CD4-positive, alpha-beta memory T cell (primary cell): ENCODE measurements at regions of chr19 and their contacts with region 1.

Region 1: DNA sequence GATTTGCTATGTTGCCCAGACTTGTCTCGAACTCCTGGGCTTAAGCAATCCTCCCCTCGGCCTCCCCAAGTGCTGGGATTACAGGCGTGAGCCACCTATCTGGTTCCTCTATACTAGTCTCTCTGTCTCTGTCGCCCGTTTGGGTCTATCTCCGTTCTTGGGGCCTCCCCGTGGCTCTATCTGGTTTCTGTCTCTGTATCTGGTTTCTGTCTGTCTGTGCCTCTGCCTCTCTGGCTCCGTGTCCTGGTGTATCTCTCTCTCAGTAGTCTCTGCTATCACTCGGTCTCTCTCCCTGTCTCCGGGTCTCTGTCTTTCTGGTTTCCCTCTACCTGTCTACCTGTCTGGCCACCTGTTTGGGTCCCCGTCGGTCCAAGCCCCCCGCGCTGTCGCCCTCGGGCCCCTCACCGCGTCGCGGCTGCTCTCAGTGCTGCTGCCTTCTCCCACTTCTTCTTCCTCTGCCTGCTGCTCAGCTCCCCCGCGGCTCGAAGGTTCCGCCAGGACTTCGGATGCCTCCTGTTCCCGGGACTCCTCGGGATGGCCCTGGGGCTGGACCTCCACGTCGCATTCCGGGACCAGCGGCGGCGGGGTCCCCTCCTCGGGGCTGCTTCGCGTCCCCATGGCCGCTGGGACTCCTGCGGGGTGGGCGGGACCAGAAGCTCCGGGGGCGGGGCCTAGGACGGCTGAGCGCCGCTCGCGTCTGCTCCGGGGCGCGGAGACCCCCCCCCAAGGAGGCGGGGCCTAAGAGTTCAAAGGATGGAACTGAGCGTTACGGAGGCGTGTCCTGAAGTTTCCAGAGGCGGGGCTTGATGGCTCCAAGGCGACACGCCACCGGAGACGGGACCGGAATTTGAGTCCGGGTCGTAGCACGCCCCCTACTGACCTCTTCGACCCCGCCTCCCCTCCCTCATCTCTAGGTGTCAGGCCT is 783 bp downstream of the PHLDB3 start:
- DNase-seq: peak; percentile 96 to 99 (median 97)
- H3K4me3 ChIP-seq: peak overlapping the region; percentile 73 to 74
- H3K4me3 Mint-ChIP-seq: peak overlapping the region; percentile 91 to 98 (median 94)
- H3K27ac ChIP-seq: peak overlapping the region; percentile 89
- H3K27ac Mint-ChIP-seq: peak overlapping the region; percentile 95 to 100 (median 98)
- H3K4me1 ChIP-seq: peaks cover 22% of the 10 kb centered on the region
- H3K4me1 Mint-ChIP-seq: peaks cover 16 to 51% (median 34%) of the 10 kb centered on the region in 4 donors
- H3K27me3 ChIP-seq: no peaks in the 10 kb centered on the region
- H3K27me3 Mint-ChIP-seq: no peaks in the 10 kb centered on the region

Region 2: GRCh38 chr19:43457809-43458208 is 46.0 kb before region 1 on chr19:
- CTCF ChIA-PET with region 1: interaction called, 19 read pairs
- POLR2A ChIA-PET with region 1: interaction called, 107 read pairs
- intact Hi-C with region 1: loop called (anchors 1 kb)
- DNase-seq: no peak
- H3K4me3 ChIP-seq: no peak overlapping the region
- H3K4me3 Mint-ChIP-seq: no peak overlapping the region
- H3K27ac ChIP-seq: no peak overlapping the region
- H3K27ac Mint-ChIP-seq: no peak overlapping the region
- H3K4me1 ChIP-seq: peaks cover 8% of the 10 kb centered on the region
- H3K4me1 Mint-ChIP-seq: peaks cover 4 to 23% (median 13%) of the 10 kb centered on the region in 4 donors
- H3K27me3 ChIP-seq: no peaks in the 10 kb centered on the region
- H3K27me3 Mint-ChIP-seq: no peaks in the 10 kb centered on the region

Region 3: GRCh38 chr19:43463381-43464136 is 40.2 kb before region 1 on chr19:
- CTCF ChIA-PET with region 1: interaction called, 19 read pairs
- POLR2A ChIA-PET with region 1: interaction called, 107 read pairs
- intact Hi-C with region 1: loop called (anchors 1 kb)
- DNase-seq: peak; percentile 98 to 100 (median 98)
- H3K4me3 ChIP-seq: peak overlapping the region; percentile 79 to 98
- H3K4me3 Mint-ChIP-seq: peak overlapping the region; percentile 90 to 98 (median 94)
- H3K27ac ChIP-seq: peak overlapping the region; percentile 80
- H3K27ac Mint-ChIP-seq: peak overlapping the region; percentile 95 to 100 (median 99)
- H3K4me1 ChIP-seq: peaks cover 34% of the 10 kb centered on the region
- H3K4me1 Mint-ChIP-seq: peaks cover 25 to 64% (median 43%) of the 10 kb centered on the region in 4 donors
- H3K27me3 ChIP-seq: no peaks in the 10 kb centered on the region
- H3K27me3 Mint-ChIP-seq: no peaks in the 10 kb centered on the region

Region 4: DNA sequence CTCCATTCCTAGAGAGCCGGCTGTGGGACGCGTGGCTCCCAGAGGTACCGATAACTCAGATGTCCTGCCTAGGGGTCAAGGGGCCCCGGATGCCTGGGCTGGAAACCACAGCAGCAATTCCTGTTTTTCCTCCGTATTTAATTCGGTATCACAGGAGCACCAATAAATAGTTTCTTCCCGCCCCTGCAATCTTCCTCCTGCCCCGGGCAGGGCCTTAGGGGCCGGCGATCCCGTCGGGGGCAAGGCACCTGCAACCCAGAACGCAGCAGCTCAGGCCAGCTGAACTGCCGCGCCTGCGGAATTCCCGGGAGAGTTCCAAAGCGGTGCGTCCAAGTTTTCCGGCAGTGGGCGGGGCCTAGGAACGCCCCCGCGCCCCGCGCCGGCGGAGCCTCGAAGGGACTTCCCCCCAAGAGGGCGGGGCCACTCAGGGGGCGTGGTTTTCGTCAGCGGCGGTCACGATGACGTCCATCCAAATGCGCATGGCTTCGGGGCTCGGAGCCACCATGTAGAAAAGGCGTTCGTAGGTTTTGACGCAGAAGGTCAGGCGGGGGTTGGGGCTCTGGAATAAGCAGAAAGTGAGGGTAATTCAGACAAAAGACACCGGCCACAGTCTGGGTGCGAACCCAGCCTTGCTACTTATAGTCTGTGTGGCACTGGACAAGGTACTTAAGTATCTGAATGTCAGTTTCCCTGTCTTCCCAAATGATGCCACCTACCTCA is 28.6 kb before region 1 on chr19:
- CTCF ChIA-PET with region 1: interaction called, 4 read pairs
- POLR2A ChIA-PET with region 1: interaction called, 12 read pairs
- intact Hi-C with region 1: loop called (anchors 1 kb)
- DNase-seq: peak; percentile 94 to 97 (median 95)
- H3K4me3 ChIP-seq: peak overlapping the region; percentile 26 to 53
- H3K4me3 Mint-ChIP-seq: peak overlapping the region; percentile 77 to 90 (median 86)
- H3K27ac ChIP-seq: peak overlapping the region; percentile 58
- H3K27ac Mint-ChIP-seq: peak overlapping the region; percentile 80 to 100 (median 99)
- H3K4me1 ChIP-seq: peaks cover 18% of the 10 kb centered on the region
- H3K4me1 Mint-ChIP-seq: peaks cover 12 to 31% (median 19%) of the 10 kb centered on the region in 4 donors
- H3K27me3 ChIP-seq: no peaks in the 10 kb centered on the region
- H3K27me3 Mint-ChIP-seq: no peaks in the 10 kb centered on the region

Region 5: DNA sequence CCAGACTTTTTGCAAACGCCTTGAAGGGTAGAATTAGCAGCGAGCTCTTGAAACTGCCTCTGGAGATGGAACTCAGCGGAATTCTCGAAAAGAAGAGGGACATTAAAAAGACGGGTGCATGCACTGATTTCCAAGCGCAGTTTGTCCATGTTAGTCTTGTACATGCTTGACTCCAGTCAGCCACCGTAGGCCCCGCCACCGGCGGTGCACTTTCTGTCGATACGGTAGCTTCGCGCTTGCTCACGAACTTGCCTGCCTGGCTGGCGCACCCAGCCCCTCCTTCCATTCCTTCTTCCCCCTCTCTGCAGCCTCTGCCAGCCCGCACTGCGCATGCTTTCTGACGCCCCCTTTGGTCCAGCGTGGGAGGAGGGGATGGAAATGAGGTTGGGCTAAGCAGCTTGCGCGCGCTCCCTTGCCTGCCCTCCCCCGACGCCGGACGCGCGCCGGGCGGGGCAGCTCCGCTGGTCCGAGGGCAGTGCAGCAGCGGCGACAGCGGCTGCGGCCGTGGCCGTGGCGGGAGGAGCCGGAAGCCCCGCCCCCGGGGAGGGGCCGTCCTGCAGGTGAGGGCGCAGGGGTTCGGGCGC is 29.3 kb after region 1 on chr19 and contains the start of gene ZNF575:
- CTCF ChIA-PET with region 1: interaction called, 3 read pairs
- POLR2A ChIA-PET with region 1: interaction called, 18 read pairs
- intact Hi-C with region 1: loop called (anchors 2 kb)
- DNase-seq: peak; percentile 82 to 88 (median 84)
- H3K4me3 ChIP-seq: peak within 1 kb of the TSS; percentile 69 to 88
- H3K4me3 Mint-ChIP-seq: peak within 1 kb of the TSS; percentile 91 to 99 (median 98)
- H3K27ac ChIP-seq: peak within 1 kb of the TSS; percentile 53
- H3K27ac Mint-ChIP-seq: peak within 1 kb of the TSS; percentile 95 to 99 (median 98)
- H3K4me1 ChIP-seq: peaks cover 17% of the 10 kb centered on the region
- H3K4me1 Mint-ChIP-seq: peaks cover 10 to 22% (median 15%) of the 10 kb centered on the region in 4 donors
- H3K27me3 ChIP-seq: no peaks in the 10 kb centered on the region
- H3K27me3 Mint-ChIP-seq: no peaks in the 10 kb centered on the region
- total RNA-seq, gene ZNF575: 11.0 to 11.8 TPM

Region 6: DNA sequence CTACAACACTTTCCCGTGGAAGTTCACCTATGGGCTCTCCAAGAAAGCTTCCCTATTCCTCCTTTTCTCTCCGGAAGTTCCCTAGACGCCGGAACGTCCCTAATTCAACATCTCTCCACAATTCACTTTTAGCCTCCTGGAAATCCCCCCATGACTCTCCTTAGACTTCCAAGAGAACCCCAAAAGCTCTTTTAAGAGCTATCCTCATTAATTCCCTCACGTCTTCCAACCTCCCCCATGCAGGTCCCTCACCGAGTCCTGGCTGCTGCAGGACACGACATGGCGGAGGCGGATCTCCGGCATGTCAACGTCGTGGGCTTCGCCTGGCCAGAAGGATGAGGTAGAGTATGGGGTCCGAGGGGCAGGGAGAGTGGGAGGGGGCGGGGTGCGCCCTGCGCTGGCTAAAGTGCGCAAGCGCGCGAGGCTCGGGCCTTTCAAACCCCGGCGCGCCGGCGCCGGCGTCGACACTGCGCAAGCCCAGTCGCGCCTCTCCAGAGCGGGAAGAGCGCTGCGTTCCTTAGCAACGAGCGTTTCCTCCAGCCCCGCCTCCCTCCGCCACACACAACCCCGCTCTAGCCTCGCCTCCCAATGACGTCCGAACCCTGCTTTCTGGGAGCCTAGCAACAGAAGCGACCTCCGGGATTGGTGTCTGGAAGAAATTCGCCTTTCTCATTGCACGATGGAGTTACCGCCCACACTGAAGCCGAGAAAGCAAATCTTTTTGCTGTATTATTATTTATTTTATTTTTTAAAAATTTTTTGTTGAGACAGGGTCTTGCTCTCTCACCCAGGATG is 71.6 kb after region 1 on chr19 and contains the starts of genes PINLYP and XRCC1:
- CTCF ChIA-PET with region 1: no interaction called
- POLR2A ChIA-PET with region 1: no interaction called
- intact Hi-C with region 1: loop called (anchors 1 kb)
- DNase-seq: peak; percentile 95 to 99 (median 98)
- H3K4me3 ChIP-seq: peak within 1 kb of the TSS; percentile 79 to 100
- H3K4me3 Mint-ChIP-seq: peak within 1 kb of the TSS; percentile 93 to 99 (median 96)
- H3K27ac ChIP-seq: peak within 1 kb of the TSS; percentile 99
- H3K27ac Mint-ChIP-seq: peak within 1 kb of the TSS; percentile 98 to 99 (median 99)
- H3K4me1 ChIP-seq: peaks cover 23% of the 10 kb centered on the region
- H3K4me1 Mint-ChIP-seq: peaks cover 15 to 74% (median 38%) of the 10 kb centered on the region in 4 donors
- H3K27me3 ChIP-seq: no peaks in the 10 kb centered on the region
- H3K27me3 Mint-ChIP-seq: peaks cover 0 to 2% of the 10 kb centered on the region in 2 donors
- total RNA-seq, gene PINLYP: 0.33 to 0.84 TPM
- total RNA-seq, gene XRCC1: 33.4 to 41.0 TPM